ENCODE measurements at regions of chr11 and their contacts with region 1.

Region 1: DNA sequence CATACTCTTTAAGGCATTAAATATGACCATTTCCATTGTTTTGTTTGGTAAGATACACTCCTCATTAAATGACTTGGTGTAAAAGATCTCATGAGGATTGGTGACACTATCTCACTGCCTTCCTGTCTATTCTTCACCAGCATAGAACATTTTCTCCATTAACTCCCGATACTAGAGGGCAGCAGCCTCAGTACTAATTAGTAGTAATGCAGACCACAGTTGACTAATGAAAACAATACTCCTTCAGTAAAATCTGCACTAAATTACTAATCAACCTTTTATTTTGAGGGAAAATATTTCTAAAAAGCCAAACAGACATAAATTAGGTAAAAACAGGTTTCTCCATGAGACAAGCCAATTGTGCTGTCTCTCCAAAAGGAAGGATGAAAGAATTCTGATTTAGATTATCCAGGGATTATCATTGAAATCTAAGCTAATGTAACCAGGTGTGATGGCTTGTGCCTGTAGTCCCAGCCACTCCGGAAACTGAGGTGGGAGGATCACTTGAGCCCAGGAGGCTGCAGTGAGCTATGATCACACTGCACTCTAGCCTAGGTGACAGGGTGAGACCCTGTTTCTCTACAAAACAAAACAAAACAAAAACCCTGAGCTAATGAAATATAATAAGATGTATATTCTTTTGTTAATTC is 9.4 kb downstream of the PGM2L1 start:
- DNase-seq: peak in 1 of 2 donors; percentile 72
- ATAC-seq: peak in 6 of 8 donors; percentile 67 to 81 (median 76)
- H3K4me3 ChIP-seq: no peak overlapping the region
- H3K27ac ChIP-seq: no peak overlapping the region
- H3K4me1 ChIP-seq: peaks cover 0 to 8% (median 0%) of the 10 kb centered on the region in 9 donors
- H3K27me3 ChIP-seq: no peaks in the 10 kb centered on the region
- CTCF ChIP-seq: peak; percentile 54 to 88 (median 76)

Region 2: DNA sequence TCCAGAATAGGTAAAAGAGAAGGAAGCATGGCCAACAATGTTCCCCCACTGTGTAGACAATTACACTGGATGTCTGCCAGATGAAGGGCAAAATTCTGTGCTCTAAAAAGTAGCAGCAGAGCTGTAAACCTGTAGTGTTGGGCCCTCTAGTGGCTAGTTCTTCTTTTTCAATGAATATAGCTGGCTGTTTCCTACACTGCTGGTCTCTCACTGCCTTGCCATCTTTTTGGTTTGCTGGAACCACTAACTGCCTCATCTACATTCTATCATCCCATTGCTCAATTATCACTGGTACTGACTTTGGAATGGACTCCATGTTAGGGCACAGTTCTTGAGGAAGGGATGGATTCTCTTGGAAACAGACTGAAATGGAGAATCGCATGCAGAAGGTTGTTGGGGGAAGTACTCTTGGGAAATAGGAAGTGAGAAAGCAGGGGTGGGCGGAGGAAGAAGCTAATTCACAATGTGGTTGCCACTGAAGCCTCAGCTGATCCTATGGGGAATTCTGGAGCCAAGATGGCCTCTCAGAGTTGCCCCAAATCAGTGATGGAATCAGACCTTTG is 60.6 kb after region 1 on chr11:
- intact Hi-C with region 1: loop called (anchors 1 to 5 kb)
- DNase-seq: peak in 1 of 2 donors; percentile 77
- ATAC-seq: peak; percentile 74 to 91 (median 86)
- H3K4me3 ChIP-seq: no peak overlapping the region
- H3K27ac ChIP-seq: peak overlapping the region in 1 of 10 donors; percentile 49
- H3K4me1 ChIP-seq: peaks cover 0 to 19% (median 0%) of the 10 kb centered on the region in 9 donors
- H3K27me3 ChIP-seq: no peaks in the 10 kb centered on the region
- CTCF ChIP-seq: peak; percentile 51 to 80 (median 75)

Region 3: GRCh38 chr11:74559110-74559933 is 170.5 kb after region 1 on chr11:
- intact Hi-C with region 1: loop called in 1 of 10 experiments (anchors 5 kb)
- DNase-seq: peak in 1 of 2 donors; percentile 40
- ATAC-seq: peak; percentile 45 to 92 (median 78)
- H3K4me3 ChIP-seq: no peak overlapping the region
- H3K27ac ChIP-seq: peak overlapping the region in 6 of 10 donors; percentile 3 to 62 (median 56)
- H3K4me1 ChIP-seq: peaks cover 0 to 16% (median 0%) of the 10 kb centered on the region in 9 donors
- H3K27me3 ChIP-seq: no peaks in the 10 kb centered on the region
- CTCF ChIP-seq: no peak

Region 4: GRCh38 chr11:74570266-74571061 is 181.7 kb after region 1 on chr11:
- intact Hi-C with region 1: loop called in 6 of 10 experiments (anchors 2 to 10 kb)
- DNase-seq: peak in 1 of 2 donors; percentile 34
- ATAC-seq: peak in 7 of 8 donors; percentile 74 to 86 (median 78)
- H3K4me3 ChIP-seq: no peak overlapping the region
- H3K27ac ChIP-seq: no peak overlapping the region
- H3K4me1 ChIP-seq: no peaks in the 10 kb centered on the region
- H3K27me3 ChIP-seq: peaks cover 0 to 7% (median 0%) of the 10 kb centered on the region in 7 donors
- CTCF ChIP-seq: peak; percentile 51 to 78 (median 76)

Measured in heart right ventricle (tissue), 16 donors.